Aorta (tissue), 5 donors: ENCODE measurements at regions of chr16 and their contacts with region 1.

Region 1: DNA sequence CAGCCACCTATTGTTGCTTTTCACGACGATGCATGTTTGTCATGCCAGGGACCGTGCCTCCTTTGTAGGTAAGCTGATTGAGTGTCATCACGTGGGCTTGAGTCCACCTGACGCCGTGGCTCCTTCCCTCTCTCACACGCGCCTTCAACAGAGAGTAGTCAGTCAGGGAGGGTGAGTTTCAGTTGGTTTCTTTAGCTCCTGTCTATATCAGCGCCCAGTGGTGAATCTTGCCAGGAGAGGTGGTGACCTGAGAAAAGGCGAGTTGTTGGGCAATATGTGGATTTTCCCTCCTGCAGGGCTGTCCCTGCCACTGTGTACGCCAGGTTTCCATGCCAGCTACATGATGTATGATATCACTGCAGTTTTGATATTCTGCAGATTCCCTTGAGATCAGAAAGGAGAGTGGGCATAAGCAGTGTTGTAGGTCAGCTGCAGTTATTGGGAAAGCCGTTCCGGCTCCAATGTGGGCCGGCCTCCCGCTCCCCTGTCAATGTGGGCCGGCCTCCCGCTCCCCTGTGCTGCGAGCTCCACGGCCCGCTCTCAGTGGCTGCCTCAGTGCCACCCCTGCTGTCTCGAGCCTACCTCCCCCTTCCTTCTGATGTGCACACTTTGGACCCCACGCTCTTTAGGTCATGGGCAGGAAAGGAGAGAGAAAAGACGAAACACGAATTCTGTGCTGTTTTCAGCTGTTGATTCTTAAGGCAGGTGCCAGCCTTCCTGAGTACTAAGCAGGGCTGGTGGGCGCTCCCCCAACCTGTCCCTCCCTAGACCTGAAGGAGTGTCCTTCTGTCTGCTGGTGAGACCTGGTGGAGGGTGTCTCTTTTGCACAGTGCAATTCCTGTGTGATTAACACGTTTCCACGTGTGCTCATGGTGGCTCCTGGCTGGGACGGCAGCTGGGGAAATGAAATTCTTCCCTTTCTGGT is 31.5 kb downstream of the BANP start:
- DNase-seq: no peak
- ATAC-seq: no peak
- H3K4me3 ChIP-seq: no peak overlapping the region
- H3K27ac ChIP-seq: no peak overlapping the region
- H3K4me1 ChIP-seq: no peaks in the 10 kb centered on the region
- H3K27me3 ChIP-seq: no peaks in the 10 kb centered on the region

Region 2: DNA sequence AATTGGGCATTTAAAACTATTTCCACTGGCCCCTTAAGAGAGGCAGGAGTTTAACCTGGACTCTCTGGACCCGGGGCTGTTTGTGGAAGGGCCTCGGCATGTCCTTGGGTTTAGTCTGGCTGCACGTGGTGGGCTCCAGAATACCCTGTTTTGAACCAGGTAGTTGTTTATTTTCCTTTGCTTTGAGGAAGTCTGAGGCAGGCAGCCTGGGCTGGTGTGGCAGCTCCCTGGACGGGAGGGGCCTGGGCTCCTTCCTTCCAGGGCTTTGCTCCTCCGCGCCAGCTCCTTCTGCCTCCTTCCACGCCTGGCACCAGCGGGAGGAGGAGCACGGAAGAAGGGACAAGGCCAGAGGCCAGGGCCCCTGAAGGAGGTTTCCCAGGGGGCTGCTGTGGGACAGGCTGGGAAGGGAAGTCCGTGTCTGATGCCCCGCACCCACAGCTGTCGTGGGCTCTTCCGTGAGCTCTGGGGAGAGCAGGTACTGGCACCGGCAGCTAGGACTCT is 16.0 kb before region 1 on chr16:
- intact Hi-C with region 1: no loop called
- DNase-seq: peak; percentile 78 to 84
- ATAC-seq: peak; percentile 84
- H3K4me3 ChIP-seq: peak overlapping the region in 1 of 2 donors; percentile 23
- H3K27ac ChIP-seq: peak overlapping the region; percentile 88 to 91
- H3K4me1 ChIP-seq: no peaks in the 10 kb centered on the region
- H3K27me3 ChIP-seq: no peaks in the 10 kb centered on the region

Region 3: DNA sequence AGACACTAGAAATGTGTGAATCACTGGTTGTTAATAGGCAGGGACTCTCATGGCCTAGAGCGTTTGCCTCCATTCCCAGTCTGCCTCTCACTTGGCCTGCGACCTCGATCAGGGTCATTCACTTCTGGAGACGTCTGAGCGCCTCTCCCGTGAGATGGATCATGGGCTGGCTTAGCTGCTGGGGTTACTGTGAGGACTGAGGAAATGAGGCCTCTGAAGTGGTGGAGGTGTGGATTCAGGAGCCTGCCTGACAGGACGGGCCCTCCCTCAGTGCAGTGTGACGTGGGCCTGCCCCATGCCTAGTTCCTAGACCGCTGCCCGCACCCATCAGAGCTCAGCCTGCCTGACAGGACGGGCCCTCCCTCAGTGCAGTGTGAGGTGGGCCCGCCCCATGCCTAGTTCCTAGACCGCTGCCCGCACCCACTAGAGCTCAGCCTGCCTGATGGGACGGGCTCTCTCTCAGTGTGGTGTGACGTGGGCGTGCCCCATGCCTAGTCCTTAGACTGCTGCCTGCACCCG is 30.4 kb after region 1 on chr16:
- intact Hi-C with region 1: no loop called
- DNase-seq: no peak
- ATAC-seq: no peak
- H3K4me3 ChIP-seq: no peak overlapping the region
- H3K27ac ChIP-seq: no peak overlapping the region
- H3K4me1 ChIP-seq: no peaks in the 10 kb centered on the region
- H3K27me3 ChIP-seq: no peaks in the 10 kb centered on the region

Region 4: GRCh38 chr16:88437373-88437964 is 454.7 kb after region 1 on chr16:
- intact Hi-C with region 1: loop called in 1 of 2 experiments (anchors 10 kb)
- DNase-seq: peak in 1 of 2 donors; percentile 87
- ATAC-seq: no peak
- H3K4me3 ChIP-seq: no peak overlapping the region
- H3K27ac ChIP-seq: no peak overlapping the region
- H3K4me1 ChIP-seq: no peaks in the 10 kb centered on the region
- H3K27me3 ChIP-seq: no peaks in the 10 kb centered on the region